CD4-positive, alpha-beta T cell (primary cell): ENCODE measurements at regions of chr1 and their contacts with region 1.

Region 1: GRCh38 chr1:213905344-213905743 is 82.4 kb upstream of the PROX1 start:
- DNase-seq: peak in 1 of 14 experiments; percentile 6
- ATAC-seq: no peak
- H3K4me3 ChIP-seq: no peak overlapping the region
- H3K4me3 Mint-ChIP-seq: no peak overlapping the region
- H3K27ac ChIP-seq: no peak overlapping the region
- H3K27ac Mint-ChIP-seq: no peak overlapping the region
- H3K4me1 ChIP-seq: no peaks in the 10 kb centered on the region
- H3K4me1 Mint-ChIP-seq: no peaks in the 10 kb centered on the region
- H3K27me3 ChIP-seq: no peaks in the 10 kb centered on the region
- H3K27me3 Mint-ChIP-seq: no peaks in the 10 kb centered on the region
- CTCF ChIP-seq: no peak

Region 2: DNA sequence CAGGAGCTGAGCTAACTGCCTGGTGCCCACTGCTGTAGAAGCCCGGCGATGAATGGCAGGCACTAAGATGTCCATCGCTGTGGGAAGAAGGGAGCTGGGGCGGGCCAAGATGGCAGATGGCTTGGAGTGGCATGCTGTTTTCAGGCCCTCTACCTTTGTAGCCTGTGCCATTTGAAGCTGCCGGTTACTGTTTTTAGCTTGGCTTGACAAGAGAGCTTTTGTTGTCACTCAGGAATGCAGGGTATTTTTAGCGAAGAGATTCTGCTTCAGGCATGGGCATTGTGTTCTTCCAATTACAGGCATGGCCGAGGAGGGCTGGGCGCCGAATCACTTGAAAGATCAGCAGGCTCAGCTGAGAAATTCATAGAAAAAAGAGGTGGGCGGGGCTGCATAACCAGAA is 505.6 kb before region 1 on chr1:
- CTCF ChIA-PET with region 1: no interaction called
- POLR2A ChIA-PET with region 1: no interaction called
- intact Hi-C with region 1: no loop called
- DNase-seq: no peak
- ATAC-seq: no peak
- H3K4me3 ChIP-seq: no peak overlapping the region
- H3K4me3 Mint-ChIP-seq: no peak overlapping the region
- H3K27ac ChIP-seq: no peak overlapping the region
- H3K27ac Mint-ChIP-seq: no peak overlapping the region
- H3K4me1 ChIP-seq: no peaks in the 10 kb centered on the region
- H3K4me1 Mint-ChIP-seq: no peaks in the 10 kb centered on the region
- H3K27me3 ChIP-seq: no peaks in the 10 kb centered on the region
- H3K27me3 Mint-ChIP-seq: peaks cover 17% of the 10 kb centered on the region
- CTCF ChIP-seq: no peak

Region 3: DNA sequence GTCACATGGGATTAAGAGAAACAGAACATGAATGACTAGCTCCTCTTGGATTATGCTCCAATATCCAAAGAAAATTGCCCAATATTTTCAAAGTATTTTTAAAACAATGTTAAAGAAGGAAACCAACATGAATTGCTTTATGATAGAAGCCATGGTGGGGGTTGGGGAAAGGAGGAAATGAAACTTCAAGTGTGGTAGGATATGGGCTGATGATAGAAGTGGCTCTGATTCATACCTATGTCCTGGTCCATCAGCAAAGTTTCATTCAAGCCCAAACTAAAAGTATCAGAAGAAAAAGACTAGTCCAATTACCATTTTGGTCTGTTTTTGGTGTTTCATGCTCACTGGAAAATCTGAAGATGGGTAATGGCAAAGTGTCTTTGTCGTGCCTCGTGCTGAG is 21.7 kb before region 1 on chr1:
- CTCF ChIA-PET with region 1: no interaction called
- POLR2A ChIA-PET with region 1: no interaction called
- intact Hi-C with region 1: loop called in 1 of 2 experiments (anchors 1 kb)
- DNase-seq: no peak
- ATAC-seq: no peak
- H3K4me3 ChIP-seq: no peak overlapping the region
- H3K4me3 Mint-ChIP-seq: no peak overlapping the region
- H3K27ac ChIP-seq: no peak overlapping the region
- H3K27ac Mint-ChIP-seq: no peak overlapping the region
- H3K4me1 ChIP-seq: no peaks in the 10 kb centered on the region
- H3K4me1 Mint-ChIP-seq: peaks cover 8% of the 10 kb centered on the region
- H3K27me3 ChIP-seq: no peaks in the 10 kb centered on the region
- H3K27me3 Mint-ChIP-seq: no peaks in the 10 kb centered on the region
- CTCF ChIP-seq: no peak